GM12878 (cell line): ENCODE measurements at regions of chr18 and their contacts with region 1.

Region 1: GRCh38 chr18:66993492-66993891 is 389.6 kb upstream of the CDH19 start:
- DNase-seq: no peak
- ATAC-seq: no peak
- H3K4me3 ChIP-seq: no peak overlapping the region
- H3K27ac ChIP-seq: no peak overlapping the region
- H3K4me1 ChIP-seq: no peaks in the 10 kb centered on the region
- H3K27me3 ChIP-seq: no peaks in the 10 kb centered on the region
- CTCF ChIP-seq: no peak
- EP300 ChIP-seq: no peak
- POLR2A ChIP-seq: no peak
- RAD21 ChIP-seq: no peak

Region 2: DNA sequence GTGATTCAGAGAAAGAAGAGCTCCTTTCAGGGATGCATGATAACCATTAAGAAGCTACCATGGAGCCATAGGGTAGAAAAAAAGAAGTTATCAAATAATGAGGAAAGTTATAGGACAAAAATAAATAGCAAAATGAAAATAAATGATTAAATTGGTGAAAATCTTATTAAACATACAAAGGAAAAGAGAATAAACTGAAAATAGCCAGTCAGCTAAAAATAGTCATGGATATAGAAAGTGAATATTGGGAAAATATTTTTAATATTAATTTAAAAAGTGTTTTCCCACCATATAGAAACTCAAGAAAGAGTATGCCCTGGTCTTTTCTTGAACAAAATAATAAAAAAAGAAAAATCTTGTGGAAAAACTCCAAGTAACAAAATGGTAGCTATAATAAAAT is 180.4 kb before region 1 on chr18:
- CTCF ChIA-PET with region 1: no interaction called
- POLR2A ChIA-PET with region 1: no interaction called
- RAD21 ChIA-PET with region 1: no interaction called
- SMC1A ChIA-PET with region 1: no interaction called
- in situ Hi-C with region 1: no loop called
- intact Hi-C with region 1: no loop called
- DNase-seq: no peak
- ATAC-seq: no peak
- H3K4me3 ChIP-seq: no peak overlapping the region
- H3K27ac ChIP-seq: no peak overlapping the region
- H3K4me1 ChIP-seq: no peaks in the 10 kb centered on the region
- H3K27me3 ChIP-seq: no peaks in the 10 kb centered on the region
- CTCF ChIP-seq: no peak
- EP300 ChIP-seq: no peak
- POLR2A ChIP-seq: no peak
- RAD21 ChIP-seq: no peak

Region 3: DNA sequence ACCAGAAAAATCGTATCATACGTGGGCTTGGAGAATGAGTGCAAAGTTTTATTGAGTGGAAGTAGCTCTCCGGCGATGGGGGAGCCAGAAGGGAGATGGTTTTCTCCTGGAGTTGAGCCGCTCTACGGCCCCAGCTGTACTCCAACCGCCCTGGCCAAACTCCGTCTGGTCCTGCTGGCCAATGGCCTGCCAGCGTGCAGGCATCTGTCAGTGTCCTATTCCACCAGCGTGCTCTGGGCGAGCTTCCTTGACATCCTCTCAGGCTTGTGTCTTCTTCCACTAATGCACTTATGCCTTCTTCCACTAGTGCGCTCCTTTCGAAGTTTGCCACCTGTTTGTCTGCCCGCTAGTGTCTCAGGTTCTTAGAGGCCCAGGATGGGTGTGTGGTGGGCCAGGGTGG is 44.1 kb before region 1 on chr18:
- CTCF ChIA-PET with region 1: no interaction called
- POLR2A ChIA-PET with region 1: no interaction called
- RAD21 ChIA-PET with region 1: no interaction called
- SMC1A ChIA-PET with region 1: no interaction called
- in situ Hi-C with region 1: no loop called
- intact Hi-C with region 1: loop called (anchors 5 kb)
- DNase-seq: no peak
- ATAC-seq: no peak
- H3K4me3 ChIP-seq: no peak overlapping the region
- H3K27ac ChIP-seq: no peak overlapping the region
- H3K4me1 ChIP-seq: no peaks in the 10 kb centered on the region
- H3K27me3 ChIP-seq: no peaks in the 10 kb centered on the region
- CTCF ChIP-seq: no peak
- EP300 ChIP-seq: no peak
- POLR2A ChIP-seq: no peak
- RAD21 ChIP-seq: no peak